ENCODE measurements at regions of chr3 and their contacts with region 1.

Region 1: GRCh38 chr3:150371741-150372254 is 36.3 kb upstream of the TSC22D2 start:
- DNase-seq: peak in 1 of 9 experiments; percentile 9
- ATAC-seq: no peak
- H3K4me3 ChIP-seq: no peak overlapping the region
- H3K4me3 Mint-ChIP-seq: no peak overlapping the region
- H3K27ac ChIP-seq: no peak overlapping the region
- H3K27ac Mint-ChIP-seq: no peak overlapping the region
- H3K4me1 ChIP-seq: no peaks in the 10 kb centered on the region
- H3K4me1 Mint-ChIP-seq: no peaks in the 10 kb centered on the region
- H3K27me3 ChIP-seq: no peaks in the 10 kb centered on the region
- H3K27me3 Mint-ChIP-seq: peaks cover 4% of the 10 kb centered on the region
- CTCF ChIP-seq: no peak

Region 2: GRCh38 chr3:150286390-150287147 is 85.2 kb before region 1 on chr3:
- CTCF ChIA-PET with region 1: no interaction called
- POLR2A ChIA-PET with region 1: no interaction called
- intact Hi-C with region 1: no loop called
- DNase-seq: peak in 4 of 9 experiments; percentile 8 to 68 (median 34)
- ATAC-seq: peak; percentile 83
- H3K4me3 ChIP-seq: no peak overlapping the region
- H3K4me3 Mint-ChIP-seq: no peak overlapping the region
- H3K27ac ChIP-seq: no peak overlapping the region
- H3K27ac Mint-ChIP-seq: no peak overlapping the region
- H3K4me1 ChIP-seq: no peaks in the 10 kb centered on the region
- H3K4me1 Mint-ChIP-seq: no peaks in the 10 kb centered on the region
- H3K27me3 ChIP-seq: peaks cover 2% of the 10 kb centered on the region in 2 experiments
- H3K27me3 Mint-ChIP-seq: peaks cover 13% of the 10 kb centered on the region
- CTCF ChIP-seq: peak; percentile 65

Region 3: GRCh38 chr3:150396956-150397550 is 25.3 kb after region 1 on chr3:
- CTCF ChIA-PET with region 1: no interaction called
- POLR2A ChIA-PET with region 1: no interaction called
- intact Hi-C with region 1: loop called in 1 of 2 experiments (anchors 1 kb)
- DNase-seq: no peak
- ATAC-seq: no peak
- H3K4me3 ChIP-seq: no peak overlapping the region
- H3K4me3 Mint-ChIP-seq: no peak overlapping the region
- H3K27ac ChIP-seq: no peak overlapping the region
- H3K27ac Mint-ChIP-seq: no peak overlapping the region
- H3K4me1 ChIP-seq: no peaks in the 10 kb centered on the region
- H3K4me1 Mint-ChIP-seq: no peaks in the 10 kb centered on the region
- H3K27me3 ChIP-seq: no peaks in the 10 kb centered on the region
- H3K27me3 Mint-ChIP-seq: peaks cover 3% of the 10 kb centered on the region
- CTCF ChIP-seq: no peak

Measured in CD8-positive, alpha-beta T cell (primary cell).